K562 (cell line): ENCODE measurements at regions of chr16 and their contacts with region 1.

Region 1: DNA sequence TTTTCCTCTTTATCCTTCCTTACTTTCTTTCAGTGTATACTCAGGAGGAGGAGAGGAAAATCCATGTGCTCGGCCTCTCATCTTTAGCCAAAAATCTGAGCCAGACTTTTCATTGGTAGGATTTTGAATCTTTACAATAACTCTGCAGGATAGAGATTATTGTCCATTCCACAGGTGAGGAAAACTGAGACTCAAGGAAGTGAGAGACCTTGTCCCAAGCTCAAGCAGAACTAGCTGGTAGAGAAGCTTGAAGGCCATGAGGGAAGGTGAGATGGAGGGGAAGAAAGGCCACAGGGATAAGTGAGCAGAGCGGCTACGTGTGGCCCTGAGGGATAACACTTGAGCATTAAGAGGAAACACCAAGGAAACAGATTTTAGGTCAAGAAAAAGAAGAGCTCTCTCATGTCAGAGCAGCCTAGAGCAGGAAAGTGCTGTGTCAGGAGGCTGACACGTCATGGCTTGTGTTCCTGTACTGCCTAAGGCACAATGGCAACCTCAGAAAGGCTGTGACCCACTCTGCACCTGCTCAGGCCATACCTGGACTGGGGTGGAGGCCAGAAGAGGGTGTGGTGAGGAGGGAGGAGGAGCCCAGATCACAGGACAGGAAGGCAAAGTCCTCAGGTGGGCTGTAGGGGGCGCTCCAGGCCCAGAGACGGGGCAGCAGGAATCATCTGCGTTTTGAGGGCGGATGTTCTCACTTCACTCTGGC is 11.9 kb downstream of the MT4 start:
- DNase-seq: peak; percentile 77 to 86 (median 84)
- ATAC-seq: peak; percentile 100
- H3K4me3 ChIP-seq: no peak overlapping the region
- H3K27ac ChIP-seq: no peak overlapping the region
- H3K4me1 ChIP-seq: no peaks in the 10 kb centered on the region
- H3K27me3 ChIP-seq: peaks cover 2 to 10% of the 10 kb centered on the region in 2 experiments; a peak in 4 of 5 replicates
- CTCF ChIP-seq: peak; percentile 93 to 96 (median 95)
- EP300 ChIP-seq: no peak
- POLR2A ChIP-seq: no peak
- RAD21 ChIP-seq: peak; percentile 88 to 96

Region 2: DNA sequence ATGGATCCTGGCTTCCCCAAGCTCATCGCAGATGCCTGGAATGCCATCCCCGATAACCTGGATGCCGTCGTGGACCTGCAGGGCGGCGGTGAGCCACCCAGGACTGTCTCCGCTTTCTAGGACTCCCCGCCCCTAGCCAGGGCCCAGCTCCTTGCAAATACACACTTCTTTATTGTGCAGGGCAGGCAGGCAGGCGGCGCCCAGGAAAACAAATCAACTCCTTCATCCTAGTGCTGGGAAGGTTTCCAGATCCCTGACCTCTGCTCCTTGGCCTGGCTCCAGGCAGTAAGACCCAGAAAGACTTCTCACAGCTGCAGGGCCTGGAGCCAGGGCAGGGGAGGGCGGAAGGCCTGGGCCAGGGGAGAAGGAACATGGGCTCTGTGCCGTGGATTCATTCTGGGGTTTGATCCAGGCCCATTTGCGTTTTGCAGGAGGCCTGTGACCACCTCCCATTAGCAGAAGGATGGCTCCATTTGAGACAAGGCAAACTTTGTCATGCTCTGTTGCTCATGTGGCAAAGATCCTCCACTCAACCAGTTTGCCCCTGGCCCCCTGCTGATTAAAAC is 1073.9 kb before region 1 on chr16:
- CTCF ChIA-PET with region 1: no interaction called
- POLR2A ChIA-PET with region 1: no interaction called
- in situ Hi-C with region 1: no loop called
- intact Hi-C with region 1: no loop called
- DNase-seq: peak in 1 of 4 experiments; percentile 3
- ATAC-seq: no peak
- H3K4me3 ChIP-seq: no peak overlapping the region
- H3K27ac ChIP-seq: no peak overlapping the region
- H3K4me1 ChIP-seq: peaks cover 4 to 17% of the 10 kb centered on the region in 2 experiments; a peak in 3 of 5 replicates
- H3K27me3 ChIP-seq: peaks cover 0 to 16% of the 10 kb centered on the region in 2 experiments; a peak in 2 of 5 replicates
- CTCF ChIP-seq: no peak
- EP300 ChIP-seq: no peak
- POLR2A ChIP-seq: no peak
- RAD21 ChIP-seq: no peak

Region 3: GRCh38 chr16:56513972-56514371 is 62.8 kb before region 1 on chr16:
- CTCF ChIA-PET with region 1: no interaction called
- POLR2A ChIA-PET with region 1: no interaction called
- in situ Hi-C with region 1: no loop called
- intact Hi-C with region 1: loop called (anchors 1 kb)
- DNase-seq: peak; percentile 29 to 69 (median 40)
- ATAC-seq: peak; percentile 93
- H3K4me3 ChIP-seq: no peak overlapping the region
- H3K27ac ChIP-seq: no peak overlapping the region
- H3K4me1 ChIP-seq: peaks cover 0 to 1% of the 10 kb centered on the region in 2 experiments; a peak in 1 of 5 replicates
- H3K27me3 ChIP-seq: no peaks in the 10 kb centered on the region
- CTCF ChIP-seq: peak; percentile 69 to 86 (median 71)
- EP300 ChIP-seq: no peak
- POLR2A ChIP-seq: no peak
- RAD21 ChIP-seq: peak; percentile 68 to 74

Region 4: DNA sequence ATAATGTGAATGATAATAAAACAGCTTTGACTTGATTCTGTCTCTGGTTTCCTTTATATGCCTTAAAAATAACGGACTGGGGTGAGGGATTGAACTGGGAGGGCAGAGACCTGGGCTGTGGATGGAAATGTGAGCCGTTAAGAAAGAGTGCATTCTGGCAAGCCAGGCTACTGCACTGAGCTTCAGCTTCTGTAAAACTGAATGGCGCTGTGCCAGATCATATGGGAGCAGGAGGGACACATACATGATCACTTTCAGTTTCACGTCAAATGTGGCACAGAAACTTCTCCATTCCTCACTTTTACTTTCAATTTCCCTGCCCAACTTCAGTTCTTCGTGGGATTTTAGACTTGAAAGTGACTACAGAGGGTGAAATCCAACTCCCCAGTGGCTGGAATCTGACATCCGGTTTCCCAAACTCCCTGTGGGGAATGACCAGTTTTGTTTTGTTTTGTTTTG is 32.8 kb after region 1 on chr16:
- CTCF ChIA-PET with region 1: no interaction called
- POLR2A ChIA-PET with region 1: no interaction called
- in situ Hi-C with region 1: no loop called
- intact Hi-C with region 1: no loop called
- DNase-seq: peak in 2 of 4 experiments; percentile 51 to 66
- ATAC-seq: peak; percentile 31
- H3K4me3 ChIP-seq: peak overlapping the region; percentile 47
- H3K27ac ChIP-seq: peak overlapping the region; percentile 27; the same call in 1 of the 3 replicates
- H3K4me1 ChIP-seq: peaks cover 27 to 29% of the 10 kb centered on the region in 2 experiments
- H3K27me3 ChIP-seq: no peaks in the 10 kb centered on the region
- CTCF ChIP-seq: no peak
- EP300 ChIP-seq: no peak
- POLR2A ChIP-seq: no peak
- RAD21 ChIP-seq: no peak